Activated T-helper 2 cell treated with anti-CD3 and anti-CD28 coated beads, Interferon-gamma antibody, Interleukin-2, Interleukin-4, amounts not matched to agents 10 μg/mL and 5 μg/mL and 100 μg/mL, durations not matched to agents 14 hours and 24 hours and 36 hours (primary cell): ENCODE measurements at regions of chr4 and their contacts with region 1.

Region 1: GRCh38 chr4:165112368-165113139 is at the start of gene TMEM192:
- DNase-seq: peak; percentile 87
- H3K4me3 Mint-ChIP-seq: peak within 1 kb of the TSS; percentile 92
- H3K27ac Mint-ChIP-seq: peak within 1 kb of the TSS; percentile 85
- H3K4me1 Mint-ChIP-seq: peaks cover 9% of the 10 kb centered on the region
- H3K27me3 Mint-ChIP-seq: peaks cover 16% of the 10 kb centered on the region
- total RNA-seq, gene TMEM192: 13.4 and 14.4 TPM in 2 replicates

Region 2: GRCh38 chr4:164716901-164717300 is 395.7 kb before region 1 on chr4:
- intact Hi-C with region 1: no loop called
- DNase-seq: no peak
- H3K4me3 Mint-ChIP-seq: no peak overlapping the region
- H3K27ac Mint-ChIP-seq: no peak overlapping the region
- H3K4me1 Mint-ChIP-seq: no peaks in the 10 kb centered on the region
- H3K27me3 Mint-ChIP-seq: no peaks in the 10 kb centered on the region

Region 3: DNA sequence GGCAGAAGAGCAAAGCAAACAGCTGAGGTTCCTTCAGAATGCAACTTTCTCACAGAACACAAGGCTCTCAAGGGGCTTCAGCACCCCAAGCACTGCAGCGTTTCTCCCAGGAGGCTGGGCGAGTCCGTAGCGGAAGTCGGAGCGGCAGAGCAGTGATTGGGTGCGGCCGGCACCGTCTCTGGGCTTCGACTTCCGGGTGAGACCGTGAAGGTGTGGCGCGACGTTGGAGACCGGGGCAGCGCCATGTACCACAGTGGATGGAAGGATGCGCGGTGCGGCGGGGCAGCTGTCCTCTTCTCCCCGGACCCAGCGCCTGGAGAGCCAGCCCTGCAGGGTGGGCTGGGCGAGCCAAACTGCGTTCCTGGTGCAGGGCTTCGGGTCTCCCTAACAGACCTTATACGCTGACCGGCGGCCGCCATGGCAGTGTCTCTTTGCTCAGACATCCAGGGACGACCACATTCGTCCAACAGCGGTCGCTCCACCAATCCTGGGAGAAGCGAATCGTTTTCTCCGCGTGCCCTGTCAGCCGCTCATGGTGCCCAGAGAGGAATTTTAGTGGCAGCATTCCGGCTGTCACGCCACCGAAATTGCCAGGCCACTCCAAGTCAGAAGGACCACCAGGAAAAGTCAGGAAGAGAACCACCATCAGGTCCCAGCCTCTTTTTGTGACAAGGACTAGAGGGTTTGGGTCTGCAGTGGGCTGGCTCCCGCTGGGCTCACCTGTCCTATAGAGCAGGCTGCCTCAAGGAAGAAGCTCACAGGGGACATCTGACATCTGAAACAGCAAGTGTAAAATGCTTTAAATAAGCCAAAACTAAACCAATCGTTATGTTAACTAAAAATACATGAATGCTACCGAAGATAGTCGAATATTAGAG is 155.5 kb before region 1 on chr4:
- intact Hi-C with region 1: loop called (anchors 1 kb)
- DNase-seq: peak; percentile 80
- H3K4me3 Mint-ChIP-seq: peak overlapping the region; percentile 93
- H3K27ac Mint-ChIP-seq: peak overlapping the region; percentile 55
- H3K4me1 Mint-ChIP-seq: peaks cover 21% of the 10 kb centered on the region
- H3K27me3 Mint-ChIP-seq: peaks cover 3% of the 10 kb centered on the region